Heart right ventricle (tissue), 16 donors: ENCODE measurements at regions of chr2 and their contacts with region 1.

Region 1: DNA sequence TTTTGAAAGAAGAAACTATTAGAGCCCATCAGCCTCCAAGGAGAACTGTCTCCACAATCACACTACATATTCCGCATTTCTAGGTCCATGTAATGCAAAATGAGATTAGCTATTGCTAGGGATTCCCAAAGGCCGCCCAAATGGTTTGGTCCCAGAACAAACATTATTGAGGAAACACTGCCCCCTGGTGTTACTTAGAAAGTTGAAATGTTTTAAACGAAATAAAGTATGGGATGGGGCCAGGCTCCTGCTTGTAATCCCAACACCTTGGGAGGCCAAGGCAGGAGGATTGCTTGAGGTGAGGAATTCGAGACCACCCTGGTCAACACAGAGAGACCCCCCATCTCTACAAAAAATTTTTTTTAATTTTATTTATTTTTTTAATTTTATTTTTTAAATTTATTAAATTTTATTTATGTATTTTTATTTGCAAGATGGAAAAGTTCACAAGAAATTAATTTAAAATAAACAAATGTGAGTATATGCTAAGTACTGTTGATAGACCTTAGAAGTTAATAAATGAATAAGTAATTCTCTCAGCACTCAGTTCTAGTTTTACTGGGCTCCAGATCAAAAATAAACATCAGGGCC is 5.5 kb downstream of the NHEJ1 start:
- DNase-seq: peak in 1 of 2 donors; percentile 57
- ATAC-seq: peak in 3 of 8 donors; percentile 27 to 53 (median 50)
- H3K4me3 ChIP-seq: no peak overlapping the region
- H3K27ac ChIP-seq: no peak overlapping the region
- H3K4me1 ChIP-seq: peaks cover 0 to 12% (median 6%) of the 10 kb centered on the region in 9 donors
- H3K27me3 ChIP-seq: no peaks in the 10 kb centered on the region
- CTCF ChIP-seq: peak; percentile 49 to 77 (median 66)

Region 2: GRCh38 chr2:218876562-218877219 is 278.5 kb before region 1 on chr2:
- intact Hi-C with region 1: loop called in 1 of 10 experiments (anchors 10 kb)
- DNase-seq: peak in 1 of 2 donors; percentile 57
- ATAC-seq: peak; percentile 30 to 68 (median 50)
- H3K4me3 ChIP-seq: no peak overlapping the region
- H3K27ac ChIP-seq: no peak overlapping the region
- H3K4me1 ChIP-seq: peaks cover 0 to 26% (median 19%) of the 10 kb centered on the region in 9 donors
- H3K27me3 ChIP-seq: peaks cover 39 to 100% (median 100%) of the 10 kb centered on the region in 7 donors
- CTCF ChIP-seq: peak; percentile 82 to 96 (median 93)

Region 3: GRCh38 chr2:218908721-218909619 is 246.2 kb before region 1 on chr2:
- intact Hi-C with region 1: no loop called
- DNase-seq: peak; percentile 82 to 88
- ATAC-seq: peak; percentile 95 to 98 (median 96)
- H3K4me3 ChIP-seq: peak overlapping the region; percentile 25 to 75 (median 58)
- H3K27ac ChIP-seq: peak overlapping the region in 2 of 10 donors; percentile 29 to 56
- H3K4me1 ChIP-seq: peaks cover 0 to 15% (median 13%) of the 10 kb centered on the region in 9 donors
- H3K27me3 ChIP-seq: peaks cover 0 to 40% (median 10%) of the 10 kb centered on the region in 7 donors
- CTCF ChIP-seq: no peak

Region 4: DNA sequence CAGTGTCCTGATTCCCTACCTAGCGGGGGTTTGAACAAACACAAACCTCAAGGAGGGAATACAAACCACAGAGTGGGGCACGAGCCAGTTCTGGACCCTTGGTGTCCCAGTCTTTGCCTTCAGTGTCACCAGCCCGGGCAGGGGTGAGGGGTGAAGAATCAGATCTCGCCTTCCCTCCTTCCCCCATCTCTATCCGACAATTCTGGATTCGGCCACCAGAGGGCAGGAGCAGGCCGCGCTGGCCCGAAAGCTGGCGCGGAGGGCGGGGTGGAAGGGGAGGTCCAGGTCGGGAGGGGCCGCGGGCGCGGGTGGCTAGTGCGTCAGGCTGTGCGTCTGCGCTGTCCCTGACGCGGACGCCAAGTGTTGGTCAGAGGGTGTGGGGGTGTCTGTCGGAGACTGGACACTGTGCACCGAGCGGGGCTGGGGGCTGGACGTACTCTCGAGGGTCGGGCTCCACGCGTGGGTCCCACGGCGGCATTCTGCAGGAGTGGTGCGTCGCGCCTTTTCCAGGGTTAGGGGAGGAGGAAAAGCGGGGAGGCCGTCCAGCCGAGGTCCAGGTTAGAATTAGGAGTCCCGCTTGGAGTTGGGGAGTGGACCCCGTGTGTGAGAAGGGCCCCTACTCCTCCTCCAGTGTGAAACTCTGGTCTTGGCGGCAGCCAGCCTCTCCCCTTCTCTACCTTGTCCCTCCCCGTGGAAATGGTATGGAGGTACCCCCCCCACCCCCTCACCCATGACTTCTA is 159.0 kb before region 1 on chr2:
- intact Hi-C with region 1: loop called in 1 of 10 experiments (anchors 10 kb)
- DNase-seq: peak; percentile 84 to 86
- ATAC-seq: peak; percentile 85 to 95 (median 92)
- H3K4me3 ChIP-seq: peak overlapping the region in 9 of 10 donors; percentile 14 to 50 (median 39)
- H3K27ac ChIP-seq: no peak overlapping the region
- H3K4me1 ChIP-seq: peaks cover 7 to 34% (median 24%) of the 10 kb centered on the region in 9 donors
- H3K27me3 ChIP-seq: peaks cover 29 to 99% (median 94%) of the 10 kb centered on the region in 7 donors
- CTCF ChIP-seq: peak; percentile 87 to 97 (median 92)

Region 5: DNA sequence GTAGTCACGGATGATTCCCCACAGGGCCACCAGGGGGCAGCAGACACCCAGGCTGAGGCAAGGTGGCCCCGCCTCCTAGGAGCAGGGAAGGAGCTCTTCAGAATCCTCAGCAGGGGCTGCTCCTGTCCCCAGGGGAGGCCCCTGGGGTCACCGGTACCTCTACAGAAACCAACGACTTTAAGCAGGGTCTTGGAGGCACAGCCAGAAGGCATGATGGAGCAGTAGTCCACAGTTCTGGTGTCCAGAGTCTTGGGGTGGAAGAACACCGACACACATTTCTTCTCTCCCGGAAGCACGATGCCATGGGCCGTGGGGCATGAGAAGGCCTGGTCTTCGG is 125.4 kb before region 1 on chr2:
- intact Hi-C with region 1: loop called in 5 of 10 experiments (anchors 1 to 10 kb)
- DNase-seq: peak; percentile 74 to 81
- ATAC-seq: peak; percentile 75 to 92 (median 83)
- H3K4me3 ChIP-seq: no peak overlapping the region
- H3K27ac ChIP-seq: no peak overlapping the region
- H3K4me1 ChIP-seq: no peaks in the 10 kb centered on the region
- H3K27me3 ChIP-seq: peaks cover 0 to 52% (median 42%) of the 10 kb centered on the region in 7 donors
- CTCF ChIP-seq: peak; percentile 88 to 99 (median 97)

Region 6: GRCh38 chr2:219119422-219120043 is 35.6 kb before region 1 on chr2:
- intact Hi-C with region 1: loop called in 1 of 10 experiments (anchors 2 kb)
- DNase-seq: peak; percentile 39 to 70
- ATAC-seq: peak in 7 of 8 donors; percentile 62 to 92 (median 78)
- H3K4me3 ChIP-seq: no peak overlapping the region
- H3K27ac ChIP-seq: no peak overlapping the region
- H3K4me1 ChIP-seq: peaks cover 0 to 26% (median 14%) of the 10 kb centered on the region in 9 donors
- H3K27me3 ChIP-seq: no peaks in the 10 kb centered on the region
- CTCF ChIP-seq: peak; percentile 47 to 85 (median 77)